GM18951 (cell line): ENCODE measurements at regions of chr14 and their contacts with region 1.

Region 1: GRCh38 chr14:36580856-36581831 is 1.3 kb downstream of the NKX2-8 start:
- POLR2A ChIP-seq: no peak

Region 2: GRCh38 chr14:36655963-36656686 is 75.0 kb after region 1 on chr14:
- in situ Hi-C with region 1: loop called (anchors 5 kb)
- POLR2A ChIP-seq: no peak

Region 3: GRCh38 chr14:36817071-36817930 is 236.2 kb after region 1 on chr14:
- in situ Hi-C with region 1: no loop called
- POLR2A ChIP-seq: no peak